Uterus (tissue), 4 donors: ENCODE measurements at regions of chr6 and their contacts with region 1.

Region 1: GRCh38 chr6:107819964-107820337 is 4.2 kb downstream of the SCML4 start:
- DNase-seq: no peak
- H3K4me3 ChIP-seq: no peak overlapping the region
- H3K27ac ChIP-seq: no peak overlapping the region
- H3K4me1 ChIP-seq: no peaks in the 10 kb centered on the region
- H3K27me3 ChIP-seq: no peaks in the 10 kb centered on the region
- CTCF ChIP-seq: no peak
- POLR2A ChIP-seq: no peak

Region 2: GRCh38 chr6:107832151-107833056 is 12.5 kb after region 1 on chr6:
- intact Hi-C with region 1: loop called (anchors 2 kb)
- DNase-seq: no peak
- H3K4me3 ChIP-seq: no peak overlapping the region
- H3K27ac ChIP-seq: no peak overlapping the region
- H3K4me1 ChIP-seq: no peaks in the 10 kb centered on the region
- H3K27me3 ChIP-seq: no peaks in the 10 kb centered on the region
- CTCF ChIP-seq: no peak
- POLR2A ChIP-seq: no peak